ENCODE measurements at regions of chr7 and their contacts with region 1.

Region 1: DNA sequence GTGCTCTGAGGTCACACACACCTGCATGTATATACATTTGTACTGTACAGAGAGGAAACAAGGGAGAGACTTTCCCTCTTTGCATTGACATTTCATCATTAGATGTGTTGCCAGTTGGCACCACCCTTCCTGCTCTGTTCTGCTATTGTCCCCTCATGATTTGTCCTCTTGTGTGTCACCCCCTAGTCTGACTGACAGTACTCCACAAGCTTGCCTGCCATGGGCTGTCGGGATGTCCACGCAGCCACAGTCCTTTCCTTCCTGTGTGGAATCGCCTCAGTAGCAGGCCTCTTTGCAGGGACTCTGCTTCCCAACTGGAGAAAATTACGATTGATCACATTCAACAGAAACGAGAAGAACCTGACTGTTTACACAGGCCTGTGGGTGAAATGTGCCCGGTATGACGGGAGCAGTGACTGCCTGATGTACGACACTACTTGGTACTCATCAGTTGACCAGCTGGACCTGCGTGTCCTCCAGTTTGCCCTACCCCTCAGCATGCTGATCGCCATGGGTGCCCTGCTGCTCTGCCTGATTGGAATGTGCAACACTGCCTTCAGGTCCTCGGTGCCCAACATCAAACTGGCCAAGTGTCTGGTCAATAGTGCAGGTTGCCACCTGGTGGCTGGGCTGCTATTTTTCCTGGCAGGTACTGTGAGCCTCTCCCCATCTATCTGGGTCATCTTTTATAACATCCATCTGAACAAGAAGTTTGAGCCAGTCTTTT is 9.4 kb downstream of the CLDN12 start:
- DNase-seq: peak; percentile 73 to 79 (median 79)
- ATAC-seq: peak; percentile 76 to 94 (median 88)
- H3K4me3 ChIP-seq: no peak overlapping the region
- H3K27ac ChIP-seq: peak overlapping the region in 2 of 3 donors; percentile 54 to 61
- H3K4me1 ChIP-seq: peaks cover 0 to 51% (median 12%) of the 10 kb centered on the region in 4 donors
- H3K27me3 ChIP-seq: no peaks in the 10 kb centered on the region
- CTCF ChIP-seq: peak; percentile 41 to 67 (median 62)
- POLR2A ChIP-seq: no peak

Region 2: DNA sequence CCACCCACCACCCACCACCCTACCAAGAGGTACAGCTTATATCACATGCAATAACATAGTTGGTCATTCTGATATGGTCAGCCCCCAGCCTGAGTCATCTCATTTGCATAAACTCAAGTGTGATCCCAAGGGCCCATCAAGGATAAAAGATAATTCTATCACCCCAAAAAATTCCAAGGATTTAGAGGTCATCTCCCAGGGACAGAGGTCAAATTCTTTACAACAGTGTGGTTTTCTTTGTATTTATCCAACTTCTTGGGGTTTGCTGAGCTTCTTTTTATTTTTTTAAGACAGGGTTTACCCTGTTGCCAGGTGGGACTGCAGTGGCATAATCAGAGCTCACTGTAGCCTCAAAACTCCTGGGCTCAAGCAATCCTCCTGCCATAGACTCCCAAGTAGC is 75.5 kb before region 1 on chr7:
- intact Hi-C with region 1: loop called in 1 of 2 experiments (anchors 10 kb)
- DNase-seq: no peak
- ATAC-seq: no peak
- H3K4me3 ChIP-seq: no peak overlapping the region
- H3K27ac ChIP-seq: no peak overlapping the region
- H3K4me1 ChIP-seq: no peaks in the 10 kb centered on the region
- H3K27me3 ChIP-seq: no peaks in the 10 kb centered on the region
- CTCF ChIP-seq: no peak
- POLR2A ChIP-seq: no peak

Region 3: DNA sequence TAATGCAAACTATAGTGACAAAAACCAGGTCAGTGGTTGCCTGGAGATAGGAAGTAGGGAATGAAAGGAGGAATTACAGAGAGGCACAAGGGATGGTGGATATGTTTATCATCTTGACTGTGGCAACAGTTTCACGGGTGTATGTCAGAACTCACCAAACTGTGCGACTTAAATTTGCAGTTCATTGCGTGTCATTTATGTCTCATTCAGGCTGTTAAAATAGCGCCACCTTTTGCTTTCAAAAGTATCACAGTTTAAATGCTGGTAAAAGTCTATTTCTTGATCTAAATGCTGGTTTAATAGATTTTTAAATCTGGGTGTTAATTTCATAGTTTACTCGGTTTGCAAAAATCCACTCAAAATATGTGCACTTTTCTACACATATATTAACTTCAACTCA is 107.9 kb after region 1 on chr7:
- intact Hi-C with region 1: no loop called
- DNase-seq: no peak
- ATAC-seq: peak; percentile 35 to 72 (median 58)
- H3K4me3 ChIP-seq: no peak overlapping the region
- H3K27ac ChIP-seq: no peak overlapping the region
- H3K4me1 ChIP-seq: no peaks in the 10 kb centered on the region
- H3K27me3 ChIP-seq: no peaks in the 10 kb centered on the region
- CTCF ChIP-seq: peak; percentile 29 to 47 (median 36)
- POLR2A ChIP-seq: no peak

Region 4: DNA sequence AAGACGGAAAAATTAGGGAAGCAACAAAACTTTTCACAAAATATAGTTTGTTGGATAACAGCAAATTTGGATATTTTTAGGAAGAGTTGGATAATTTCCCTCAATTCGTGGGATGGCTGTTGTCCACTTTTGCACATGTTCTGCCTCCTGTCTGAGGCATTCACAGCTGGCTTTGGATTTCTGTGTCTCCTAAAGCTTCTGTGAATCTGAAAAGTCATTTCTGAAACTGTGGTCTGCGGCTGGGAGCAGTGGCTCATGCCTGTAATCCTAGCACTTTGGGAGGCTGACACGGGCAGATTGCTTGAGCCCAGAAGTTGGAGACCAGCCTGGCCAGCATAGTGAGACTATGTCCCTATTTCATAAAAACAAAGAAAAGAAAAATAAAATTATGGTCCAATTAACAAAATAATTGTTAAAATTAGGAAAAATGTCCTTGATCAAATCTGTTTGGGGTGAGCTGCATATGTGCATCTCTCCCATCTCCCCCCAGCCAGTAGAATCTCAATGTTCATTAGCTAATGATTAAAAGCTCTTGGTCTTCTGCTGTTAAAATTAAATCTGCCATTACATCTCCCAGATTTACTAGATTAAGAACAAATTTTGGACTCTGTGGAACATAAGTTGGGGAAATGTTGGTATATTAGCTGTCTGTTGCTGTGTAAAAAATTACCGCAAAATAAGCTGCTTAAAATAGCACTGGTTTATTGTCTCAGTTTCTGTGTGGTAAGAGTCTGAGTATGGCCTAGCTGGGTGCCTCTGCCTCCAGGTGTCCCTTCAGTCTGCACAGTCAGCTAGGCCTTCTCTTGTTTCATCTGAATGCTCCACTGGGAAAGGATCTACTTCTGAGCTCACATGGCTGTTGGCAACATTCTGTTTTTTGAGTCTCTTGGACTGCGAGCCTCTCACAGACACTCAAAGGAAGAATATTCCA is 519.6 kb after region 1 on chr7:
- intact Hi-C with region 1: no loop called
- DNase-seq: no peak
- ATAC-seq: no peak
- H3K4me3 ChIP-seq: no peak overlapping the region
- H3K27ac ChIP-seq: no peak overlapping the region
- H3K4me1 ChIP-seq: no peaks in the 10 kb centered on the region
- H3K27me3 ChIP-seq: no peaks in the 10 kb centered on the region
- CTCF ChIP-seq: no peak
- POLR2A ChIP-seq: no peak

Measured in right lobe of liver (tissue), 6 donors.